ENCODE measurements at regions of chr2 and their contacts with region 1.

Region 1: DNA sequence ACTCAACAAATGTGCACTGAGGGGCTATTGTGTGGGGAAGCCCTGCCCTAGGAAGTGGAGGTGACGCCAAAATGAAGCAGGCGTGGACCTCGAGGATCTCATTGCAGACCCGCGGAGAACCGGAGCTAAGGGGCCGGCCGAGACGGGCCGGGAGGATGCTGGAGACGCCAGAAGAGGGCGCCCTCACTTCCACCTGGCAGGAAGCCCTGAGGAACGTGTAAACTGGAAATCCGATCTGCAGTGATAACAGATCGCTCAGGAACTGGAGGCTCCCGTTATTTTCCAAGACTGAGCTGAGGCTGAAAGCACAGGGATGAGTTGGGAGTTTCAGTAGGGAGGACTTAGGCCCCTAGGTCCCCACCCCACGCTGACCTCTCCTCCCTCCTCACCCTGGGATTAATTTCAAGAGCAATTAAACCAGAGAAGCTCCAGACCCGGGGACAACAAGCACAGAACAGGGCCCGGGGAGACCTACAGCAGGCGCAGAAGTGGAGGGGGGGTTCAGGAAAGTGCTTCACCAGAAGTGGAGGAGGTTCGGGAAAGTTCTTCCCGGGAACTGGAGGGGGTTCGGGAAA is 7.7 kb upstream of the COL6A3 start:
- DNase-seq: no peak
- H3K4me3 ChIP-seq: no peak overlapping the region
- H3K27me3 ChIP-seq: no peaks in the 10 kb centered on the region
- CTCF ChIP-seq: peak; percentile 95

Region 2: GRCh38 chr2:237132799-237133198 is 288.8 kb before region 1 on chr2:
- CTCF ChIA-PET with region 1: no interaction called
- POLR2A ChIA-PET with region 1: no interaction called
- DNase-seq: no peak
- H3K4me3 ChIP-seq: no peak overlapping the region
- H3K27me3 ChIP-seq: no peaks in the 10 kb centered on the region
- CTCF ChIP-seq: peak; percentile 15; the same call in 1 of the 2 replicates

Region 3: GRCh38 chr2:237304763-237305514 is 116.7 kb before region 1 on chr2:
- CTCF ChIA-PET with region 1: no interaction called
- POLR2A ChIA-PET with region 1: no interaction called
- DNase-seq: peak; percentile 89
- H3K4me3 ChIP-seq: no peak overlapping the region
- H3K27me3 ChIP-seq: no peaks in the 10 kb centered on the region
- CTCF ChIP-seq: no peak

Region 4: DNA sequence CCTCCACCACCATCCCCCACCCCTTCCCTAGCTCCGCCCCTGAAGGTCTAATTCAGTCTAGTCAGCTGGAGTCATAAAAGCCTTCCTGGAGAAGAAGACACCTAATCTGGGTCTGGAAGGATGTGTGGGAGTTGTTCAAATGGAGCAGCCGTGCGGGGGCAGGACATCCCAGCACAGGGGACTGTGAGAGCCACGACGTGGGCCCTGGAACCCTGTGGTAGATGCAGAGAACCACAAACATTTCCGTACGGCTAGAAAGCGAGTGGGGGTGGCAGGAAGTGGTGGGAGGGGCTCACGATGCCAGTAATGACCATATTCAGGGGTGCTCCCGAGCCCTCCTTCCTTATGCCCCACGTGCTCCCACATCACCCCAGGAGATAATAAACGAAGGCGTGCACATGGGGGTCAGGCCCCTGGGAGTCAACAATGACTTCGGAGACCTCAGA is 13.3 kb after region 1 on chr2:
- CTCF ChIA-PET with region 1: interaction called, 27 read pairs
- POLR2A ChIA-PET with region 1: no interaction called
- DNase-seq: no peak
- H3K4me3 ChIP-seq: no peak overlapping the region
- H3K27me3 ChIP-seq: no peaks in the 10 kb centered on the region
- CTCF ChIP-seq: no peak

Region 5: GRCh38 chr2:237441605-237442274 is 20.1 kb after region 1 on chr2:
- CTCF ChIA-PET with region 1: interaction called, 17 read pairs
- POLR2A ChIA-PET with region 1: no interaction called
- DNase-seq: no peak
- H3K4me3 ChIP-seq: no peak overlapping the region
- H3K27me3 ChIP-seq: no peaks in the 10 kb centered on the region
- CTCF ChIP-seq: no peak

Measured in BJ (cell line).